GM10248 (cell line): ENCODE measurements at regions of chr3 and their contacts with region 1.

Region 1: DNA sequence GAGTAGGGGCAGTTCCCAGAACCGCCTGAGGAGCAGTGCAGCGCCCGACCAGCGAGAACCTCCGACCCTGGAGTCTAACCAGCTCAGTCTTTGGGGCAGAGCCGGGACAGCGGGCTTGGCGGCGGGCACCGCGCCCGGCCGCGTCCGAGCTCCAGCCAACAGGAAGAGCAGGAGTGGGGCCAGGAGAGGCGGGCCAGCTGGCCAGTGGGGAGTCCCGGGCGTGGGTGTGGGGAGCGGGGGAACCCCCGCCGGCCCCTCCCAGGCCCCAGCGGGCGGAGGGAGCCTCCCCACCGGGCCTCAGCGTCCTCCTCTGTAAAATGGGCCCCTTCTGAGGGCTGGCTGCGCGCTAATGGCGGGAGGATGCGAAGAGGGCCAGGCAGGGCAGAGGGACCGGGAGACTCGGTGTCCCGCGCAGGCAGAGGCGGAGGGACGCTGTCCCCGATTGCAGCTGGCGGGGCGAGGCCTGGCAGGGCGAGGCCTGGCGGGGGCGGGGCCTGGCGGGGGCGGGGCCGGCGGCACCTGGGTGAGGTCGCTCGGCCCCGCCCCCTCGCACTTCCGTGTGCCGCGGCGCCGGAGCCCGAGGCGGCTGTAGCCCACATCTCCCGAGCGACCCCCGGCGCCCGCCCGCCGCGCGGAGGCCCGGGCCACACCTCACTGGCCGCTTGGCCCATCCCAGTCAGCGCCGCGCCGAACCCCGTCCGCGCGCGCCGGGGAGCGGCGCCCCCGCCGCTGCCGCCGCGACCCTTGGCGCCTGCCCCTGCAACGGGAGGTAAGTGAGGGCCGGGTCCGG is at the start of gene PRKCD:
- DNase-seq: peak; percentile 96
- CTCF ChIP-seq: no peak

Region 2: GRCh38 chr3:53056442-53056841 is 104.4 kb before region 1 on chr3:
- CTCF ChIA-PET with region 1: no interaction called
- POLR2A ChIA-PET with region 1: no interaction called
- DNase-seq: no peak
- CTCF ChIP-seq: peak; percentile 13

Region 3: DNA sequence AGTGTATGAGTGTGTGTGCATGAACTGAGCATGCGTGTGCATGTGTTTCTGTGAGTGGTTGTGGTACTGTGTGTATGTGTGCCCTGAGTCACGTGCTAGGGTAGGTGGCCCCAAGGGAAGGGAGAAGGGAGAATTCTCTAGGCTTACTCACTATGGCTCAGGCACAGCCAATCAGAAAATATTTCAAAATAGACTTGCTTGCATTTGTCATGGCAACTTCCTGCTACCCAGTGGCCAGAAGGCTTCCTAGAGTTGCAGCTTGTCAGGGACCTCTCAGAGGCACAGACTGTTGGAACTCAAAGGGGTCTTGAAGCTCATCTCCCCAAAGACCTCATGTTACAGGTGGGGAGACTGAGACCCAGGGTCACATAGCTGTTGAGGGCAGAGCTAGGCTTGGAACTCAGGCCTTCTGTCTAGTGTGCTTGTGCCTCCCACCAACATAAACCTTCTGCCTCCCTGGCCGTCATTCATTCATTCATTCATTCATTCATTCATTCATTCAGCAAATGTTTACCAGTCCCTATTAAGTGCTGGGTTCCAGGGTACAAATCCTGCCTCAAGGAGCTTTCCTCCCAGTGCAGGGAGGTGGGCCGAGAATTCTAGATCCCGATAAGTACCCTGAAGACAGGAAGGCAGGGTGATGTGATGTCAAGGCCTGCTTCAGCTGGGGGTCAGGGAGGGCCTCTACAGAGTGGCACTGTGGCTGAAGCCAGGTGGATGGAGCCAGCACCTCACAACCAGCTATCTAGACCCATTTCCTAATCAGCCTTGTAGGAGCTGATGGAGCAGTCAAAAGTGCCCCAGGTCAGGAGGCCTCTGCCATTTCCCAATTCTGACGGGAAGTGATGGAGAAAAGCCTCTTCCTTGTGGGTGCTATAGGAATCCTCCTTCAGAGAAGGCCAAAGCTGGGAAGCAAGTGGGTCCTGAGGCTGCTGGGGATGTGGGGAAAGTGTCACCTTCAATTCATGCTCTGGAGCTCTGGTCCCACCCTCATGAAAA is 19.7 kb before region 1 on chr3:
- CTCF ChIA-PET with region 1: interaction called, 43 read pairs
- POLR2A ChIA-PET with region 1: interaction called, 3 read pairs
- DNase-seq: no peak
- CTCF ChIP-seq: no peak

Region 4: DNA sequence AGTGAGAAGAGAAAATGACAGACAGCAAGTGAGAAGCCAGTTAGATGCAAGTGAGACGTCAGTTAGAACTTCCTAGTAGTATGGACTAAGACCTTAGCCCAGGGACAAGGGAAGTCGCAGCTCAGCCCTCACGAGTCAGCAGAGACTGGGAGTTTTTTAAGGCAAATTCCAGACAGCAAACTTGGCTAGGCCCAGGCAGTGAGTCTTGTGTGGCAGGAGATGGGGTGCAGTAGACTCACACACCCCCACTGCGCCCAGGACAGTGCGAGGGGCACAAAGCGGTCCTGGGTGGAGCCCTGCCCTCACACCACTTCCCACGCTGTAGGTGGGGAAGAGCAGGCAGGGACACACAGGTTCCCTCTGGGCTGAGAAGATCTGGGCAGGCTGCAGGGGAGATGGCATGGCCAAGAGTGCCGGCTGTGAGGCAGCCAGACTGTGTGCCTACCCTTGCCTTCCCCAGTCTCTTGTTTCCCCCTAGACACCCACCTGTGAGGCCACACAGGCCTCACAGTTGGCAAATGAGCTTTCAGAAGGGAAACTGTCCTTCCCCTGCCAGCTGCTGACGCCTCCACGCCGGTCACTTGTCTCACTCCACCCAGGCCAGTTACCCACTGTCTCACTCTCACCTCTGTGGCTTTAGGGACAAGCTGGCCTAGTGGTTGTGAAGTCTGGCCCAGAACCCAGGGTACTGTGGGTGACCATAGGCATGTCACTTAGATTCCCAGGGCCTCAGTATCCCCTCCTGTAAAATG is 13.5 kb before region 1 on chr3:
- CTCF ChIA-PET with region 1: interaction called, 16 read pairs
- POLR2A ChIA-PET with region 1: interaction called, 3 read pairs
- DNase-seq: no peak
- CTCF ChIP-seq: no peak